Activated CD4-positive, alpha-beta T cell treated with anti-CD3 and anti-CD28 coated beads, Interleukin-2, amount 10 ng/mL, durations not matched to agents 24 days and 14 days (primary cell): ENCODE measurements at regions of chr12 and their contacts with region 1.

Region 1: DNA sequence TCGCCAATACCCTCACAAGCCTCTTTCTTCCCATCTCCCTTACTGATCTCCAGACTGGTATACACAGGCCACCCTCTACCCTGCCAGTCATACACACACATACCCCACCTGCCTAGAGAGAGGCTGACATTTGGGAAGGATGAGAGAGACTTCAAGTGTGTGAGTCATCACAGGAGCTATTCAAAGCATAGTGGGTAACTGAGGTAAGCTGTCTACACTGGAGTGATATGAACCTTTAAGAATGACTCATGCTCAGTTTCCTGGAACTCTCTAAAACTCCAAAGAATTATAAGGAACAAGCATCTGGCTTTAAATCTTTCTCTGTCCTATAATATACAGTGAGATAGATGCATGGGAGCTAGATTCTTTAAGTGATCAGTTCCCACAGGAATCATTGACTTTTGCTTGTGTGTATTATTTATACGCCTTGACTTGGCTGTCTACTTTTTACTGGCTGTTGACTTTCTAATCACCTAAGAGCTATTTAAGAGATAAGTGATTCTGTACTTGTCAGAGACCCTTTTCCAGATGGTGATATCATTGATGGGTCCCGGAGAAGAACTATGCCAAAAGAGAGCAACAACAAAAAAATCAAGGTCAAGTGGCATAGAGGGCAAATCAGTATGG is 5.8 kb downstream of the IGF1 start:
- DNase-seq: peak; percentile 67
- H3K4me3 Mint-ChIP-seq: peak overlapping the region; percentile 20
- H3K27ac Mint-ChIP-seq: peak overlapping the region; percentile 29
- H3K4me1 Mint-ChIP-seq: peaks cover 34% of the 10 kb centered on the region
- H3K27me3 Mint-ChIP-seq: no peaks in the 10 kb centered on the region

Region 2: DNA sequence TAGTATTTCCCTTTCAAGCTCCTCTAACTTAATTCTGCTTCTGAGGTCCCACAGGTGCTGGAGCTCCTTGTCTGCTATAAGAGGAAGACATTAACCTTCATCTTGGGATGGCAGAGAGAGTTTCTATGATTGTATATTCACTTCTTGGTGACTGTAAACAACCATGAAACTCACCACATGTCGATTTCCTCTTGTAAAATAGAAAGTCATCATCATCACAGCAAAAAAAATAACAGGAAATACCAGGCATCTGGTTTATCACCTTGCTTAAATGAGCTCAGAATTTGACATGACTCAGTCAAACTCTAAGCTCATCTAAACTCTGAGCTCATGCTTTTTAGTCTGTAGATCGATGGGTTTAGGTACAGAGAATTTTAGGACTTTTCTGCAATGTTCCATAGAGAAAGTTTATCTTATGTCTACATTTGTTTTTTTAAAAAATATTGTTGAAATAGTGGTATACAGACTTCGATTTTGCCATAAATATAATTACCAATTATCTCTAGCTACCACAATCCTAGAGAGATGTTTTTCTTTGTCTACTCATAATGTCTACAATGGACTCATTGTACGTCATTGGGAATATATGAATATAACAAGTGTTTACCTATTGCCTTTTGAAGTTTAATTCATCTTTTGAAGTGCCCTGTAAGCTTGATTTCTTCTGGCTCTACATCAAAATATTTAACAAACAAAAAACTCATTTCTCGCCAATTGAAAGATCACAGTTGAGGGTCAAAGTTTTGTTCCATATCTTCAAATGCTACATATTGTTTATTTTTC is 52.6 kb before region 1 on chr12:
- intact Hi-C with region 1: loop called (anchors 2 kb)
- DNase-seq: peak; percentile 64
- H3K4me3 Mint-ChIP-seq: peak overlapping the region; percentile 0
- H3K27ac Mint-ChIP-seq: peak overlapping the region; percentile 67
- H3K4me1 Mint-ChIP-seq: peaks cover 10% of the 10 kb centered on the region
- H3K27me3 Mint-ChIP-seq: peaks cover 4% of the 10 kb centered on the region